Gastrocnemius medialis (tissue), 4 donors: ENCODE measurements at regions of chr3 and their contacts with region 1.

Region 1: GRCh38 chr3:25664810-25665314 is at the start of gene TOP2B:
- DNase-seq: peak; percentile 96
- ATAC-seq: peak; percentile 92
- H3K4me3 ChIP-seq: peak within 1 kb of the TSS; percentile 70 to 86 (median 74)
- H3K27ac ChIP-seq: peak within 1 kb of the TSS; percentile 91 to 96 (median 95)
- H3K4me1 ChIP-seq: peaks cover 36 to 44% of the 10 kb centered on the region in 2 donors
- H3K27me3 ChIP-seq: no peaks in the 10 kb centered on the region
- CTCF ChIP-seq: no peak
- POLR2A ChIP-seq: peak; percentile 84 to 97
- total RNA-seq, gene TOP2B: 56.1 to 81.5 (median 64.7) TPM

Region 2: GRCh38 chr3:25768851-25769250 is 104.0 kb after region 1 on chr3:
- in situ Hi-C with region 1: loop called in 1 of 4 experiments (anchors 25 kb)
- intact Hi-C with region 1: no loop called
- DNase-seq: no peak
- ATAC-seq: no peak
- H3K4me3 ChIP-seq: no peak overlapping the region
- H3K27ac ChIP-seq: no peak overlapping the region
- H3K4me1 ChIP-seq: no peaks in the 10 kb centered on the region
- H3K27me3 ChIP-seq: no peaks in the 10 kb centered on the region
- CTCF ChIP-seq: no peak
- POLR2A ChIP-seq: no peak

Region 3: GRCh38 chr3:25789596-25790556 is 125.0 kb after region 1 on chr3 and contains the start of gene OXSM:
- in situ Hi-C with region 1: loop called in 1 of 4 experiments (anchors 10 kb)
- intact Hi-C with region 1: no loop called
- DNase-seq: peak; percentile 89 to 92
- ATAC-seq: peak; percentile 95 to 98
- H3K4me3 ChIP-seq: peak within 1 kb of the TSS; percentile 64 to 84 (median 68)
- H3K27ac ChIP-seq: peak within 1 kb of the TSS; percentile 88 to 98 (median 94)
- H3K4me1 ChIP-seq: peaks cover 26 to 39% of the 10 kb centered on the region in 2 donors
- H3K27me3 ChIP-seq: no peaks in the 10 kb centered on the region
- CTCF ChIP-seq: no peak
- POLR2A ChIP-seq: peak; percentile 96 to 98
- total RNA-seq, gene OXSM: 5.9 to 26.3 (median 13.3) TPM

Region 4: DNA sequence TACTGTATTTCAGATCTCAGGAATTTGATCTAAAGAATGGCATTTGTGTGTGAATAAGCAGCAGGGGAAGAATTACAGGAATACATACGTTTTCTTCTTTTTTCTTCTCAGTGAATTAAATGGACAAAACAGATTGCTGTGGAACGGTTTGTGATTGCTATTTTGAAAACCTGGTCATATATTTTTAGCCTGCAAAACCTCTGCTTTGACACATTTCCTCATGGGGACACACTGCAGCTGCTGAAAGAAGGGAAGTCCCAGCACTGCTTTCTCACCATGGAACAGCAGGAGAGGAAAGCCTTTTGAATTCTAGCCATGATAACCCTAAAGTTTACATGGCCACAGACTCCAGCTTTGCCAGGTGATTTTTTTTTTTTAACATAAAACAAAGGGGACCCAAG is 440.0 kb after region 1 on chr3:
- in situ Hi-C with region 1: loop called in 2 of 4 experiments (anchors 25 kb)
- intact Hi-C with region 1: loop called (anchors 10 kb)
- DNase-seq: no peak
- ATAC-seq: peak in 1 of 2 donors; percentile 20
- H3K4me3 ChIP-seq: no peak overlapping the region
- H3K27ac ChIP-seq: peak overlapping the region in 3 of 4 donors; percentile 1 to 49 (median 32)
- H3K4me1 ChIP-seq: peaks cover 53 to 60% of the 10 kb centered on the region in 2 donors
- H3K27me3 ChIP-seq: no peaks in the 10 kb centered on the region
- CTCF ChIP-seq: no peak
- POLR2A ChIP-seq: no peak

Region 5: DNA sequence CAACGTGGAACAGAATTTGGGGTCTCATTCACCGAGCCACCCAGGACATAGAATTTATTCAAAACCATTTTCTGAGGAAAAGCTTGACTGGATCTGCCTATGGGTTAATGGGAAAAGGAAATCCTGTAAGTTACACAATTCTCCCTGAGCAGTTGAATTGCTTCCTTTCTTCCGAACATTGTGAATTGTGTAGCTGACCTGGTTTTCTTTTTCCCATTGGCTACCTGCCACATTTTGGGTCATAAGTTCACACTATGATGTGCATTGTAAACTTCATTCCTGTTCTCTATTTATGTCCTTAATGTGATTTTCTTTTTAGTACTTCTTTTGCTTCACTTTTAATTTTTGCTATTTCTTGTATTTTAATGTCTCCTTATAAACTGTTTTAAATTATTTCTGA is 571.7 kb after region 1 on chr3:
- in situ Hi-C with region 1: no loop called
- intact Hi-C with region 1: loop called (anchors 10 kb)
- DNase-seq: no peak
- ATAC-seq: no peak
- H3K4me3 ChIP-seq: no peak overlapping the region
- H3K27ac ChIP-seq: peak overlapping the region in 1 of 4 donors; percentile 21
- H3K4me1 ChIP-seq: no peaks in the 10 kb centered on the region
- H3K27me3 ChIP-seq: no peaks in the 10 kb centered on the region
- CTCF ChIP-seq: no peak
- POLR2A ChIP-seq: no peak